IMR-90 (cell line): ENCODE measurements at regions of chr7 and their contacts with region 1.

Region 1: DNA sequence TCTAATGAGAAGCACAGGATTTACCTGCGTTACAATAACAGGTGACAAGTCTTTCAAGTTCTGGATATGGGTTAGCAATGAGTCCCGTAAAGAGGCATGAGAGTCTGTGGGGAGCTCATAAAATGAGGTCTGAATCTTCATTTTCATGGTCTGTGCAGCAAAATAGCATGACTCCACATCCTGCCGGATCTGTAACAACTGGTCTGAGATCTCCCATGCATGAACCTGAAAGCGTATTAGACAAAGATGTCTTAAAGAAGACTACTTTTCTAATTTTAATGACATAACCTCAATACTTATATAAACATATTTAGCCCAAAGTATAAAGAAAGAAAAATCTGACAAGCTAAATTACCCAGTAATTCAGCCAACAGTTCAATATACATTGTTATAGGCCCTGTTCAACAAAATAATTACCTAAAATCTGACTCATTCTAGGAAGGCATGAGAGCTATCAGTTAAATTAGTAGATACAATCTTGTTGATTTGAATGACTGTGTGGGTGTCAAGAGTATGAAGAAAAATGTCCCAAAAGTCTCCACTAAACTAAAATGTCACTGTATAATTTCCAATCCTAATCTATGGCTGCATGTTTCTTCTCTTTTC is 36.9 kb downstream of the TNPO3 start:
- DNase-seq: no peak
- ATAC-seq: no peak
- H3K4me3 ChIP-seq: no peak overlapping the region
- H3K27ac ChIP-seq: no peak overlapping the region
- H3K4me1 ChIP-seq: no peaks in the 10 kb centered on the region; the same call in 1 of the 2 replicates
- H3K27me3 ChIP-seq: no peaks in the 10 kb centered on the region
- CTCF ChIP-seq: no peak
- POLR2A ChIP-seq: no peak
- RAD21 ChIP-seq: no peak

Region 2: DNA sequence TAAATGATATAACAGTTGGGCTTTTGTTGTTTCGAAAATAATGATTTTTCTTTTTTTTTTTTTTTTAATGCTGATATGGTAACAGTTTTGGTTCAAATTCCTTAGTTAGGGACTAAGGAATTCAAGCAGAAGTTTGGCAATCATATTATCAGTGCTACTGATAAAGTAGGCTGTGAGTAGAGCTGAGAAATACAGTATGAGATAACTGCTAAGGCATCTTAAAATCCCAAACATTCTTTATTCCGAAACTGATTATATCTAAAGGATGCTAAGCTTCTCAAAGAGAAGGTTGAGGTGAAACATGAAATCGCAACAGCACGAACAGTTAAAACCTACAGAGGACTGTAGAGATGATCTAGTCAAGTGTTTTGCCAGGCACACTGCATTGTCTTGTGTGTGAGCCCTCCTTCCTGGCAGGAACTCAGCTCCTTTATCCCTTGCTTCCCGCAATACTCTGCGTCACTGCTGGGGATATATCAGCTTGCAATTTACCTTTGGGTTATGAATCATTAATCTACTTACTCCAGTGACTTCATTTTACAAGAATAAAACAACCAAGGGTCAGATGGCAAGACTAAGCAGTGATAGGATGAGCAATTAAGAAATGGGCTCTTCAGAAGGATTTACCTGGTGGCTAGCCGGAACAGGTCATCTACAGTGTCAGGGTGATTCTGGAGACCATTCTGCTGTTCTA is 43.6 kb before region 1 on chr7:
- CTCF ChIA-PET with region 1: no interaction called
- POLR2A ChIA-PET with region 1: no interaction called
- dilution Hi-C with region 1: no loop called
- in situ Hi-C with region 1: no loop called
- intact Hi-C with region 1: loop called (anchors 5 kb)
- DNase-seq: peak; percentile 45
- ATAC-seq: peak; percentile 53
- H3K4me3 ChIP-seq: no peak overlapping the region
- H3K27ac ChIP-seq: no peak overlapping the region
- H3K4me1 ChIP-seq: no peaks in the 10 kb centered on the region; the same call in 1 of the 2 replicates
- H3K27me3 ChIP-seq: no peaks in the 10 kb centered on the region
- CTCF ChIP-seq: no peak
- POLR2A ChIP-seq: no peak
- RAD21 ChIP-seq: no peak